A673 (cell line): ENCODE measurements at regions of chr19 and their contacts with region 1.

Region 1: GRCh38 chr19:7366701-7367420 is 18.1 kb downstream of the ARHGEF18 start:
- DNase-seq: peak; percentile 60
- H3K4me3 ChIP-seq: no peak overlapping the region
- H3K27ac ChIP-seq: no peak overlapping the region
- H3K4me1 ChIP-seq: no peaks in the 10 kb centered on the region
- H3K27me3 ChIP-seq: peaks cover 14% of the 10 kb centered on the region
- CTCF ChIP-seq: peak; percentile 56

Region 2: GRCh38 chr19:7348587-7349230 is 18.2 kb before region 1 on chr19 and contains the start of gene ARHGEF18:
- CTCF ChIA-PET with region 1: interaction called, 11 read pairs
- POLR2A ChIA-PET with region 1: no interaction called
- intact Hi-C with region 1: no loop called
- DNase-seq: no peak
- H3K4me3 ChIP-seq: no peak within 1 kb of the TSS
- H3K27ac ChIP-seq: no peak within 1 kb of the TSS
- H3K4me1 ChIP-seq: no peaks in the 10 kb centered on the region
- H3K27me3 ChIP-seq: peaks cover 7% of the 10 kb centered on the region
- CTCF ChIP-seq: no peak
- total RNA-seq, gene ARHGEF18: 33.4 and 34.9 TPM in 2 replicates

Region 3: DNA sequence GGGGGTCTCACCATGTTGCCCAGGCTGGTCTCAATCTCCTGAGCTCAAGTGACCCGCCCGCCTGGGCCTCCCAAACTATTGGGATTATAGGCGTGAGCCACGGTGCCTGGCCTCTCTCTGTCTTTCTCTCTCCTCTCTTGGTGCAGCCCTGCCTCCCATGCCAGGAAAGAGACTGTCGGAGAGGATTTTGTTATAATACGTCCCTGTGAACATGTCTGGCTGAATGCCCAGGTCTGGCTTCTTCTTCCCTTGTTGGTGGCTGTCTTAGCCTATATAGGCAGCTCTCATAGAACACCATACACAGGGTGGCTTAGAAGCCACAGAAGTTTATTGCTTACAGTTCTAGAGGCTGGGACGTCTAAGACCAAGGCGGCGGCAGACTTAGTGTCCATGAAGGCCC is 75.6 kb after region 1 on chr19:
- CTCF ChIA-PET with region 1: no interaction called
- POLR2A ChIA-PET with region 1: no interaction called
- intact Hi-C with region 1: no loop called
- DNase-seq: peak; percentile 95
- H3K4me3 ChIP-seq: no peak overlapping the region
- H3K27ac ChIP-seq: peak overlapping the region; percentile 57
- H3K4me1 ChIP-seq: peaks cover 19% of the 10 kb centered on the region
- H3K27me3 ChIP-seq: no peaks in the 10 kb centered on the region
- CTCF ChIP-seq: no peak